Naive thymus-derived CD4-positive, alpha-beta T cell (primary cell): ENCODE measurements at regions of chr11 and their contacts with region 1.

Region 1: GRCh38 chr11:66643745-66644437 is 5.4 kb downstream of the RBM4 start:
- DNase-seq: no peak
- ATAC-seq: no peak
- H3K4me3 ChIP-seq: peak overlapping the region; percentile 5
- H3K4me3 Mint-ChIP-seq: peak overlapping the region; percentile 6 to 100 (median 94)
- H3K27ac ChIP-seq: peak overlapping the region; percentile 5
- H3K27ac Mint-ChIP-seq: peak overlapping the region in 5 of 9 donors; percentile 48 to 98 (median 93)
- H3K4me1 ChIP-seq: peaks cover 56 to 78% of the 10 kb centered on the region in 2 donors
- H3K4me1 Mint-ChIP-seq: peaks cover 79 to 92% (median 91%) of the 10 kb centered on the region in 7 donors
- H3K27me3 ChIP-seq: no peaks in the 10 kb centered on the region
- H3K27me3 Mint-ChIP-seq: no peaks in the 10 kb centered on the region

Region 2: DNA sequence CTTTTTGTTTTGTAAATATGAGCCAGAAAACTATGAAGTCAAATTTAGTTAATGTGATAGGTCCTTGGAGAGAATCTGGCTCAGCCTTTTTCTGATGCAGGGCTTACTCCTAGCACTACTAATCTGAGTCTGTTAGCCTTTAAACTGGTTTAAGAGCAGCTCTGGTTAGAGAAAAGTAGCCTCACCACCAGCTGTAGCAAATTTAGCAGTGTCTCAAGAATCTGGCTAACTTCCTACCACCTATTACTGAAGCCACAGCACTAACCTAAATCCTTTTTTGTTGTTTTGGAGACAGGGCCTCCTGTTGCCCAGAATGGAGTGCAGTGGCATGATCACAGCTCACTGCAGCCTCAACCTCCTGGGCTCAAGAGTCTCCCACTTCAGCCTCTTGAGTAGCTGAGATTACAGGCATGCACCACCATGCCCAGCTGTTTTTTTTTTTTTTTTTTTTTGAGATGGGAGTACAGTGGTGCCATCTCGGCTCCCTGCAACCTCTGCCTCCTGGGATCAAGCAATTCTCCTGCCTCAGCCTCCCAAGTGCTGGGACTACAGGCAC is 19.9 kb after region 1 on chr11:
- CTCF ChIA-PET with region 1: no interaction called
- POLR2A ChIA-PET with region 1: interaction called, 5 read pairs
- intact Hi-C with region 1: loop called in 1 of 2 experiments (anchors 2 kb)
- DNase-seq: no peak
- ATAC-seq: peak; percentile 12
- H3K4me3 ChIP-seq: no peak overlapping the region
- H3K4me3 Mint-ChIP-seq: no peak overlapping the region
- H3K27ac ChIP-seq: no peak overlapping the region
- H3K27ac Mint-ChIP-seq: peak overlapping the region in 2 of 9 donors; percentile 17 to 36
- H3K4me1 ChIP-seq: no peaks in the 10 kb centered on the region
- H3K4me1 Mint-ChIP-seq: peaks cover 17 to 54% (median 49%) of the 10 kb centered on the region in 7 donors
- H3K27me3 ChIP-seq: no peaks in the 10 kb centered on the region
- H3K27me3 Mint-ChIP-seq: no peaks in the 10 kb centered on the region

Region 3: GRCh38 chr11:66891851-66892660 is 248.2 kb after region 1 on chr11:
- CTCF ChIA-PET with region 1: no interaction called
- POLR2A ChIA-PET with region 1: no interaction called
- intact Hi-C with region 1: no loop called
- DNase-seq: peak in 1 of 9 donors; percentile 50
- ATAC-seq: peak; percentile 37
- H3K4me3 ChIP-seq: no peak overlapping the region
- H3K4me3 Mint-ChIP-seq: no peak overlapping the region
- H3K27ac ChIP-seq: no peak overlapping the region
- H3K27ac Mint-ChIP-seq: peak overlapping the region in 1 of 9 donors; percentile 24
- H3K4me1 ChIP-seq: no peaks in the 10 kb centered on the region
- H3K4me1 Mint-ChIP-seq: peaks cover 0 to 9% (median 0%) of the 10 kb centered on the region in 7 donors
- H3K27me3 ChIP-seq: no peaks in the 10 kb centered on the region
- H3K27me3 Mint-ChIP-seq: peaks cover 0 to 5% (median 0%) of the 10 kb centered on the region in 5 donors